Right cardiac atrium (tissue), 5 donors: ENCODE measurements at regions of chr10 and their contacts with region 1.

Region 1: GRCh38 chr10:74589226-74589673 is 237.2 kb upstream of the KAT6B start:
- DNase-seq: peak; percentile 91 to 96 (median 93)
- ATAC-seq: peak; percentile 96 to 97
- H3K4me3 ChIP-seq: no peak overlapping the region
- H3K27ac ChIP-seq: peak overlapping the region; percentile 45
- H3K4me1 ChIP-seq: no peaks in the 10 kb centered on the region
- H3K27me3 ChIP-seq: no peaks in the 10 kb centered on the region

Region 2: DNA sequence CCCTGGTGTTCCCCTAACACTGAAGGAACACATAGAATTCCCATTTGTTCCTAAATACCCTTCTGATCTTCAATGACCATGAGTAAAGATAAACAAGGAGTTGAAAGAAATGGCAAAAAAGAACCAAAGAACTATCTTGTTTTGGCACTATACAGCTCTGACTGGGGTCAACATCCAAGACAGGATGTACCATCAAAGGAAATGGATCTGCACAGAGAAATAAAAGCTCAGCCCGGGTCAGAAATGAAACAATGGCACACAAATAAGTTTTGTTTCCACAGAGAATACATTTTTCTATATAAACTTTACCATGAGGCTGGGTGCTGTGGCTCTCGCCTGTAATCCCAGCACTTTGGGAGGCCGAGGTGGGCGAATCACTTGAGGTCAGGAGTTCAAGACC is 980.1 kb before region 1 on chr10:
- intact Hi-C with region 1: no loop called
- DNase-seq: no peak
- ATAC-seq: no peak
- H3K4me3 ChIP-seq: no peak overlapping the region
- H3K27ac ChIP-seq: no peak overlapping the region
- H3K4me1 ChIP-seq: no peaks in the 10 kb centered on the region
- H3K27me3 ChIP-seq: no peaks in the 10 kb centered on the region

Region 3: GRCh38 chr10:74176380-74177139 is 412.7 kb before region 1 on chr10:
- intact Hi-C with region 1: no loop called
- DNase-seq: peak; percentile 95 to 98 (median 97)
- ATAC-seq: peak; percentile 98 to 99
- H3K4me3 ChIP-seq: peak overlapping the region; percentile 45
- H3K27ac ChIP-seq: peak overlapping the region; percentile 61
- H3K4me1 ChIP-seq: no peaks in the 10 kb centered on the region
- H3K27me3 ChIP-seq: no peaks in the 10 kb centered on the region

Region 4: DNA sequence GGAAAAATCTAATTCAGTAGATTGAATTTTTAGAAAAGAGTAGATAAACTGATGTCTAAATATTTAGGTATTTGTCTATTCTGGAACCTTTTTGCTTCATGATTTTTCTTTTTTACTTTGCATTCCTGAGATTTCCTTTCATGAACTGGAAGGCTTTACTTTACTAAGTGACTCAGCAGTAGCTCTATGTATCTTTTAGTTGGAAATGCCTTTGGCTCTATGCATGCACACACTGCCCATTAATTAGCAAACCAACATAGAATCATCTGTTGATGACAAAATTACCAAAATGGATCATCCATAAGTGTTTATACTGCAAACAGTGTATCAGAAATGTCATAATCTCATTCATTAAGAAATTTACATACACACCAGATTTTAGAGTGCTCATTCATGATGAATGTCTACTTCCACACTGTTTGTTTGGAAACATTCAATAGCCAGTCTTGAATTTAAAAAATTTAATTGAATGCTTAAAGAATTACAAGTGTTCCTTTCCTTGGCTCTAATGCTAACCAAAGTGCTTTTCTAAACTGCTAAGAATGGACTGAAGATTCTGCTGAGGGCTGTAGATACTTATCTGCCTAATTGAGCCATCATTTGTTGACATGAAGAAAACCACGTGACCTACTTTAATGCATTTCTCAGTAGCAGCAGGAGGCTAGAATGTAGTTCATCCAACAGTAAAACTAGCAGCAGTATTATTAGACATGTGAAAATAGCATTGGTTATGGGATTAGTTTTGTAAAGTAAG is 156.2 kb before region 1 on chr10:
- intact Hi-C with region 1: no loop called
- DNase-seq: no peak
- ATAC-seq: no peak
- H3K4me3 ChIP-seq: no peak overlapping the region
- H3K27ac ChIP-seq: no peak overlapping the region
- H3K4me1 ChIP-seq: no peaks in the 10 kb centered on the region
- H3K27me3 ChIP-seq: no peaks in the 10 kb centered on the region

Region 5: GRCh38 chr10:74548676-74549075 is 40.6 kb before region 1 on chr10:
- intact Hi-C with region 1: no loop called
- DNase-seq: no peak
- ATAC-seq: no peak
- H3K4me3 ChIP-seq: no peak overlapping the region
- H3K27ac ChIP-seq: no peak overlapping the region
- H3K4me1 ChIP-seq: no peaks in the 10 kb centered on the region
- H3K27me3 ChIP-seq: no peaks in the 10 kb centered on the region

Region 6: DNA sequence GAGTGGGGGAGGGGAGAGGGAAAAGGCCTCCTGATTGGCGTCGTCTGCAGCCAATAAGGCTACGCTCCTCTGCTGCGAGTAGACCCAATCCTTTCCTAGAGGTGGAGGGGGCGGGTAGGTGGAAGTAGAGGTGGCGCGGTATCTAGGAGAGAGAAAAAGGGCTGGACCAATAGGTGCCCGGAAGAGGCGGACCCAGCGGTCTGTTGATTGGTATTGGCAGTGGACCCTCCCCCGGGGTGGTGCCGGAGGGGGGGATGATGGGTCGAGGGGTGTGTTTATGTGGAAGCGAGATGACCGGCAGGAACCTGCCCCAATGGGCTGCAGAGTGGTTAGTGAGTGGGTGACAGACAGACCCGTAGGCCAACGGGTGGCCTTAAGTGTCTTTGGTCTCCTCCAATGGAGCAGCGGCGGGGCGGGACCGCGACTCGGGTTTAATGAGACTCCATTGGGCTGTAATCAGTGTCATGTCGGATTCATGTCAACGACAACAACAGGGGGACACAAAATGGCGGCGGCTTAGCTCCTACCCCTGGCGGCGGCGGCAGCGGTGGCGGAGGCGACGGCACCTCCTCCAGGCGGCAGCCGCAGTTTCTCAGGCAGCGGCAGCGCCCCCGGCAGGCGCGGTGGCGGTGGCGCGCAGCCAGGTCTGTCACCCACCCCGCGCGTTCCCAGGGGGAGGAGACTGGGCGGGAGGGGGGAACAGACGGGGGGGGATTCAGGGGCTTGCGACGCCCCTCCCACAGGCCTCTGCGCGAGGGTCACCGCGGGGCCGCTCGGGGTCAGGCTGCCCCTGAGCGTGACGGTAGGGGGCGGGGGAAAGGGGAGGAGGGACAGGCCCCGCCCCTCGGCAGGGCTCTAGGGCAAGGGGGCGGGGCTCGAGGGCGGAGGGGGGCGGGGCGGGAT is 237.1 kb after region 1 on chr10 and contains the start of gene KAT6B:
- intact Hi-C with region 1: loop called in 1 of 4 experiments (anchors 5 kb)
- DNase-seq: peak; percentile 100
- ATAC-seq: peak; percentile 96
- H3K4me3 ChIP-seq: peak within 1 kb of the TSS; percentile 75
- H3K27ac ChIP-seq: peak within 1 kb of the TSS; percentile 100
- H3K4me1 ChIP-seq: peaks cover 5% of the 10 kb centered on the region
- H3K27me3 ChIP-seq: no peaks in the 10 kb centered on the region
- total RNA-seq, gene KAT6B: 44.1 to 53.0 (median 46.7) TPM